AG04449 (cell line): ENCODE measurements at regions of chr19 and their contacts with region 1.

Region 1: GRCh38 chr19:47483800-47484690 is at the start of gene KPTN:
- DNase-seq: peak; percentile 58
- H3K4me3 ChIP-seq: peak within 1 kb of the TSS; percentile 74
- CTCF ChIP-seq: peak; percentile 99

Region 2: GRCh38 chr19:47428177-47428894 is 55.7 kb before region 1 on chr19:
- CTCF ChIA-PET with region 1: interaction called, 12 read pairs
- POLR2A ChIA-PET with region 1: no interaction called
- DNase-seq: peak; percentile 75
- H3K4me3 ChIP-seq: peak overlapping the region; percentile 51
- CTCF ChIP-seq: no peak

Region 3: GRCh38 chr19:47494729-47495128 is 10.7 kb after region 1 on chr19:
- CTCF ChIA-PET with region 1: interaction called, 17 read pairs
- POLR2A ChIA-PET with region 1: interaction called, 5 read pairs
- DNase-seq: no peak
- H3K4me3 ChIP-seq: no peak overlapping the region
- CTCF ChIP-seq: no peak

Region 4: DNA sequence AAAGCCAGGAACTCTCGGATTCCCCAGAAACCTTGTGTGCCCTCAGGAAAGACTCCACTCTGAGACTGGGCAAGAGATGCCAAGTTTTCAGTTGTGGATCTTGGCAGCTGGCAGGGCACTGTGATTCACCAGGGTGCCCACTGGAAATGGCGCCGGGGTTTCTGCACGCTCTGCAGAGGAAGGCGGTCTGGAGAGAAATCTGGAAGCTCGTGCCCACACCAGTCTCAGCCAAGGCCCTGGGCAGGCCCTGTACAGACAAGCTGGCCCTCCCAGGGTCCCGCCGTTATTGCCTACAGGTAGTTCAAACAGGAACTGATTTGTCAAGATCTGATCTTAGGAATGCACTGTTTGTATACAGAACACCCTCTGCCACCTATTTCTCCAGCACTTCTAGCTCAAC is 26.0 kb after region 1 on chr19:
- CTCF ChIA-PET with region 1: interaction called, 33 read pairs
- POLR2A ChIA-PET with region 1: interaction called, 4 read pairs
- DNase-seq: no peak
- H3K4me3 ChIP-seq: no peak overlapping the region
- CTCF ChIP-seq: no peak

Region 5: GRCh38 chr19:47707135-47707925 is 223.3 kb after region 1 on chr19:
- CTCF ChIA-PET with region 1: interaction called, 22 read pairs
- POLR2A ChIA-PET with region 1: no interaction called
- DNase-seq: no peak
- H3K4me3 ChIP-seq: no peak overlapping the region
- CTCF ChIP-seq: peak; percentile 94